ENCODE measurements at regions of chr4 and their contacts with region 1.

Region 1: GRCh38 chr4:127732613-127733328 is 2.6 kb downstream of the SLC25A31 start:
- DNase-seq: peak; percentile 41
- ATAC-seq: peak; percentile 96
- H3K4me3 ChIP-seq: no peak overlapping the region
- H3K27ac ChIP-seq: no peak overlapping the region
- H3K4me1 ChIP-seq: no peaks in the 10 kb centered on the region
- H3K27me3 ChIP-seq: no peaks in the 10 kb centered on the region
- CTCF ChIP-seq: peak; percentile 40 to 84 (median 76); a peak in 5 of 6 replicates
- POLR2A ChIP-seq: no peak
- RAD21 ChIP-seq: peak; percentile 86

Region 2: DNA sequence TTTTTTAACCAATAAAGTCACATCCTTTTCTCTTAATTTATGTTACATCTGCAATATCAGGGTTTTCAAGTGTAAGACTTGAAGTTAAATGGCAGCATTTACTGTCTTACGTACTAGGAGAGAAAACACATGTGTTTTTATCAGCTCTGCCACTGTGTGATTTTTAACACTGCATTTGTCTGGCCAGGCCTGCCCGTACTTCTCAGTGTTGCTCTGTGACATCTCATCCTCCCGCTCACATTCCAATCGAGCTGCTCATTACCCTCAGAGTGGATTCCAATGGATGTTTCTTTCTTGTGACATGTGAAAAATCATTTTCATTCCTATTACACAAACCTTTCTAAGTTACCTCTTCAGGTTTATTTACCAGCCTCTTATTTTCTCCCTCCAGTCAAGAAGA is 1997.7 kb before region 1 on chr4:
- CTCF ChIA-PET with region 1: no interaction called
- POLR2A ChIA-PET with region 1: no interaction called
- RAD21 ChIA-PET with region 1: no interaction called
- intact Hi-C with region 1: no loop called
- DNase-seq: no peak
- ATAC-seq: peak; percentile 92
- H3K4me3 ChIP-seq: no peak overlapping the region
- H3K27ac ChIP-seq: no peak overlapping the region
- H3K4me1 ChIP-seq: peaks cover 15 to 33% of the 10 kb centered on the region in 2 experiments
- H3K27me3 ChIP-seq: no peaks in the 10 kb centered on the region
- CTCF ChIP-seq: no peak
- POLR2A ChIP-seq: no peak
- RAD21 ChIP-seq: no peak

Region 3: GRCh38 chr4:127586922-127587571 is 145.7 kb before region 1 on chr4:
- CTCF ChIA-PET with region 1: interaction called, 16 read pairs
- POLR2A ChIA-PET with region 1: no interaction called
- RAD21 ChIA-PET with region 1: interaction called in 1 of 2 experiments, 4 read pairs
- intact Hi-C with region 1: no loop called
- DNase-seq: peak; percentile 38
- ATAC-seq: peak; percentile 100
- H3K4me3 ChIP-seq: no peak overlapping the region
- H3K27ac ChIP-seq: no peak overlapping the region
- H3K4me1 ChIP-seq: peaks cover 0 to 6% of the 10 kb centered on the region in 2 experiments; a peak in 2 of 4 replicates
- H3K27me3 ChIP-seq: no peaks in the 10 kb centered on the region
- CTCF ChIP-seq: peak; percentile 36 to 83 (median 83); a peak in 5 of 6 replicates
- POLR2A ChIP-seq: no peak
- RAD21 ChIP-seq: peak; percentile 73

Measured in HCT116 (cell line).